ENCODE measurements at regions of chr6 and their contacts with region 1.

Region 1: GRCh38 chr6:33700391-33701050 is 11.0 kb downstream of the UQCC2 start:
- DNase-seq: peak; percentile 51 to 76 (median 71)
- ATAC-seq: peak; percentile 78
- H3K4me3 ChIP-seq: no peak overlapping the region
- H3K4me3 Mint-ChIP-seq: peak overlapping the region in 1 of 10 donors; percentile 32
- H3K27ac ChIP-seq: peak overlapping the region; percentile 38
- H3K27ac Mint-ChIP-seq: peak overlapping the region; percentile 53 to 93 (median 84)
- H3K4me1 ChIP-seq: peaks cover 19 to 37% of the 10 kb centered on the region in 2 donors
- H3K4me1 Mint-ChIP-seq: peaks cover 21 to 59% (median 44%) of the 10 kb centered on the region in 7 donors
- H3K27me3 ChIP-seq: no peaks in the 10 kb centered on the region
- H3K27me3 Mint-ChIP-seq: no peaks in the 10 kb centered on the region

Region 2: GRCh38 chr6:33668927-33669326 is 31.6 kb before region 1 on chr6:
- CTCF ChIA-PET with region 1: interaction called, 6 read pairs
- POLR2A ChIA-PET with region 1: interaction called, 4 read pairs
- intact Hi-C with region 1: loop called in 1 of 2 experiments (anchors 5 kb)
- DNase-seq: peak in 8 of 9 donors; percentile 37 to 80 (median 70)
- ATAC-seq: peak; percentile 91
- H3K4me3 ChIP-seq: no peak overlapping the region
- H3K4me3 Mint-ChIP-seq: peak overlapping the region in 3 of 10 donors; percentile 26 to 49 (median 40)
- H3K27ac ChIP-seq: peak overlapping the region; percentile 62
- H3K27ac Mint-ChIP-seq: peak overlapping the region; percentile 80 to 93 (median 88)
- H3K4me1 ChIP-seq: peaks cover 0 to 12% of the 10 kb centered on the region in 2 donors
- H3K4me1 Mint-ChIP-seq: peaks cover 3 to 19% (median 15%) of the 10 kb centered on the region in 7 donors
- H3K27me3 ChIP-seq: no peaks in the 10 kb centered on the region
- H3K27me3 Mint-ChIP-seq: no peaks in the 10 kb centered on the region

Measured in naive thymus-derived CD4-positive, alpha-beta T cell (primary cell).